ENCODE measurements at regions of chr1 and their contacts with region 1.

Region 1: GRCh38 chr1:66253330-66253921 is 280.5 kb upstream of the SGIP1 start:
- DNase-seq: peak; percentile 55
- ATAC-seq: peak; percentile 90
- H3K4me3 ChIP-seq: no peak overlapping the region
- H3K27ac ChIP-seq: no peak overlapping the region
- H3K4me1 ChIP-seq: peaks cover 1% of the 10 kb centered on the region; the same call in 1 of the 2 replicates
- H3K27me3 ChIP-seq: no peaks in the 10 kb centered on the region
- CTCF ChIP-seq: peak; percentile 75 to 92 (median 81)
- EP300 ChIP-seq: no peak
- POLR2A ChIP-seq: no peak
- RAD21 ChIP-seq: peak; percentile 100

Region 2: GRCh38 chr1:65958561-65959350 is 294.7 kb before region 1 on chr1:
- CTCF ChIA-PET with region 1: interaction called, 18 read pairs
- POLR2A ChIA-PET with region 1: no interaction called
- RAD21 ChIA-PET with region 1: interaction called, 4 read pairs
- SMC1A ChIA-PET with region 1: interaction called, 5 read pairs
- in situ Hi-C with region 1: no loop called
- intact Hi-C with region 1: no loop called
- DNase-seq: peak; percentile 7
- ATAC-seq: peak; percentile 78
- H3K4me3 ChIP-seq: no peak overlapping the region
- H3K27ac ChIP-seq: no peak overlapping the region
- H3K4me1 ChIP-seq: no peaks in the 10 kb centered on the region
- H3K27me3 ChIP-seq: peaks cover 0 to 2% of the 10 kb centered on the region in 2 experiments; a peak in 1 of 4 replicates
- CTCF ChIP-seq: peak; percentile 42 to 73 (median 46); a peak in 5 of 6 replicates
- EP300 ChIP-seq: no peak
- POLR2A ChIP-seq: no peak
- RAD21 ChIP-seq: peak; percentile 95

Region 3: DNA sequence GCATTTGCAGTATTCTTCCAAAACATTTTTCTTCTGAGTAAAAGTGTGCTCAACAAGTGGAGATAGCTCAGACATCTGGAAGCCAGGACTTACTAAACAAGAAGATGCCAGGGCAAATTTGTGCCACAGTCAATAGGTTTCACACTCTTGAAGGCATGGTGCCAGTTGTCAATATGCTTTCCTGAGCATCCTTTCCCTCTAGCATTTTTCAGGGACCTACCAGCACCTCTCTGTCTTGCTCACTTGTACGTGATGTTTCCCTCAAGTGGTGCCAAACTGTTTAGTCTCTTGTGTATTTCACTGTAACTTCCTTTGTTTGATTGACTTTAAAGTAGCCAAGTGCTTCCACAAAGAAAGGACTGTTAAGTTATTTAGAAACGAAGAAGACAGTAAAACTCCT is 86.5 kb after region 1 on chr1:
- CTCF ChIA-PET with region 1: interaction called, 86 read pairs
- POLR2A ChIA-PET with region 1: no interaction called
- RAD21 ChIA-PET with region 1: interaction called, 131 read pairs
- SMC1A ChIA-PET with region 1: interaction called, 153 read pairs
- in situ Hi-C with region 1: no loop called
- intact Hi-C with region 1: loop called (anchors 1 kb)
- DNase-seq: no peak
- ATAC-seq: peak; percentile 8
- H3K4me3 ChIP-seq: peak overlapping the region; percentile 42
- H3K27ac ChIP-seq: peak overlapping the region; percentile 83
- H3K4me1 ChIP-seq: peaks cover 21% of the 10 kb centered on the region
- H3K27me3 ChIP-seq: no peaks in the 10 kb centered on the region
- CTCF ChIP-seq: no peak
- EP300 ChIP-seq: no peak
- POLR2A ChIP-seq: no peak
- RAD21 ChIP-seq: no peak

Region 4: DNA sequence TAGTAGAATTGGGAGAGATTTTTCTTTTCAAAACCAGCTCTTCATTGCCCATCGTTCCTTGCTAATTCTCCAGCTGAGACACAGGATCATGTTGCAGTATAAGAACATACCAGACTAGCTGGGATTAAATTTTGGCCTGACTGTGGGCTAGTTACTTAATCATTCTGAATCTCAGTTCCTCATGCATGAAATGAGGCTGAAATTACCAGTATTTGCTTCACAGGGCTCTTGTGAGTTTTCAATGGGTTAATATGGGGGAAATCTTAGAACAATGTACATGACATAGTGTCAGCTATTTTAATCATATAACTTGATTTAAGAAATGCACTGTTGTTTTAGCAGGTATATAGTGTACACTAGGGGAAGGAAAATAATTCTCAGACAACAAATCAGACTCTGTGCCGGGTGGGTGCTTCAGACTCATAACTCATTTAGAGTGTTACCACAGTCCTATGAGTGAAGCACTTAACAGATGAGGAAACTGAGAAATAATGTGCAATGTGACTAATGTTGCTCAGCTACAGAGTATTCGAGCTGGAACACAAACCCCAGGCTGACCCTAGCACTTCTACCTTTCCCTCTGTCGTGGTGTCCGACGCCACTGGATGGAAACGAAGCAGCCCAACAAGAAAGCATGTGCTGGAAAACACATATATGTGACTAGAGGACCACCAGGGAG is 142.9 kb after region 1 on chr1:
- CTCF ChIA-PET with region 1: interaction called, 11 read pairs
- POLR2A ChIA-PET with region 1: interaction called, 4 read pairs
- RAD21 ChIA-PET with region 1: interaction called, 4 read pairs
- SMC1A ChIA-PET with region 1: interaction called, 6 read pairs
- in situ Hi-C with region 1: no loop called
- intact Hi-C with region 1: no loop called
- DNase-seq: peak; percentile 71
- ATAC-seq: peak; percentile 76
- H3K4me3 ChIP-seq: no peak overlapping the region
- H3K27ac ChIP-seq: peak overlapping the region; percentile 80
- H3K4me1 ChIP-seq: peaks cover 75% of the 10 kb centered on the region
- H3K27me3 ChIP-seq: no peaks in the 10 kb centered on the region
- CTCF ChIP-seq: no peak
- EP300 ChIP-seq: peak in 1 of 2 experiments; percentile 52; a peak in 2 of 4 replicates
- POLR2A ChIP-seq: no peak
- RAD21 ChIP-seq: no peak; the same call in 1 of the 2 replicates

Region 5: DNA sequence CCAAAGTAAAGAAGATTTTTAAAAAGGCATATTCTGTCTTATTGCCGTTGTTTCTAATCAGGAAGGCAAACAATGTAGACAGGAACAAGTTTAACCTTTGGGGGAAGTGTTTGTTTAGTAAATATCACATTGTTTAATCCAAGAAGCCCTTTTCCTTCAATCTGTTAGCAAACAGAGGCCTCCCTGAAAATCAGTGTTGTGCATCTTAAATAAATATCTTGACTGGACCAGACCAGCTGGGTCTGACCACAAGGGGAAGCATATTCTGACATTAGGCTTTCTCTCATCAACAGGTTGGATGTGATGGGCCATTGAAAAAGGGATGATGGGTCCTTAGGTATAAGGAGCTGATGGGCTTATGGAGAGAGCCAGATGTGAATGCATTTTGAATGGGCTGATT is 198.7 kb after region 1 on chr1:
- CTCF ChIA-PET with region 1: interaction called, 595 read pairs
- POLR2A ChIA-PET with region 1: interaction called, 5 read pairs
- RAD21 ChIA-PET with region 1: interaction called, 519 read pairs
- SMC1A ChIA-PET with region 1: interaction called, 663 read pairs
- in situ Hi-C with region 1: no loop called
- intact Hi-C with region 1: no loop called
- DNase-seq: no peak
- ATAC-seq: peak; percentile 25; the same call in 1 of the 3 replicates
- H3K4me3 ChIP-seq: no peak overlapping the region
- H3K27ac ChIP-seq: no peak overlapping the region
- H3K4me1 ChIP-seq: no peaks in the 10 kb centered on the region
- H3K27me3 ChIP-seq: no peaks in the 10 kb centered on the region
- CTCF ChIP-seq: no peak
- EP300 ChIP-seq: no peak
- POLR2A ChIP-seq: no peak
- RAD21 ChIP-seq: no peak

Region 6: DNA sequence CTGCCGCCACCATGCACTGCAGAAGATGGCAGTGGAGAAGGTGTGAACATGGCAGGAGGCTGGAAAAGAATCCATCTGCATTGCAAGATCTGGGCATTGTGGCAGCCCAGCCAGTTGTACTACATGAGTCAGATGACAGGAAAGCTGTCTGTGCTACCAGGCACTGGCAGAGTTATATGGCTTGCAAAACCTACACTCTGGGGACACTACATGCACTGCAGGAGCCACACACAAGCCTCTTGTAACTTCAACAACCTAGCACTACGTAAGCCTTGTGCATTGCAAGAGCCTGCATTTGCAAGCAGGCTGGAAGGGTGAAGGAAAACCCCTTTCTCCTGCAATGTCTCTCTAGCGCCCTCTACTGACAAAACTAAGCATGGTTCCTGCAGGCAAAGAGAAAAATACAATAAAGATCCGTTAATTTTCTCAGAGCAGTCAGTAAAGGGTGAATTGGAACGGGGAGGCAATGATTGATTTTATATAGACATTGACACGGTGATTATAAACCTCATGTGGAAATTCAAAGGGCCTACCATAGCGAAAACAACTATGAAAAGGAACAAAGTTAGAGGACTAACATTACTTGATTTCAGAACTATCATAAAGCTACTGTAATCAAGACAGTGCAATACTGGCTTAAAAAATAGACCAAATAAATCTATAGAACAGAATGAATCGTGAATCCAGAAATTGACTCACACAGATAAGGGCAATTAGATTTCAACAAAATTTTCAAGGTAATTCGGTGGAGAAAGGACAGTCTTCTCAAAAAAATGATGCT is 472.6 kb after region 1 on chr1:
- CTCF ChIA-PET with region 1: interaction called, 6 read pairs
- POLR2A ChIA-PET with region 1: no interaction called
- RAD21 ChIA-PET with region 1: no interaction called
- SMC1A ChIA-PET with region 1: interaction called, 11 read pairs
- in situ Hi-C with region 1: loop called (anchors 10 kb)
- intact Hi-C with region 1: no loop called
- DNase-seq: peak; percentile 26
- ATAC-seq: peak; percentile 93
- H3K4me3 ChIP-seq: no peak overlapping the region
- H3K27ac ChIP-seq: no peak overlapping the region
- H3K4me1 ChIP-seq: no peaks in the 10 kb centered on the region
- H3K27me3 ChIP-seq: peaks cover 0 to 8% of the 10 kb centered on the region in 2 experiments; a peak in 1 of 4 replicates
- CTCF ChIP-seq: peak; percentile 89 to 93 (median 90)
- EP300 ChIP-seq: no peak
- POLR2A ChIP-seq: no peak
- RAD21 ChIP-seq: peak; percentile 89